WTC11 (cell line): ENCODE measurements at regions of chr10 and their contacts with region 1.

Region 1: DNA sequence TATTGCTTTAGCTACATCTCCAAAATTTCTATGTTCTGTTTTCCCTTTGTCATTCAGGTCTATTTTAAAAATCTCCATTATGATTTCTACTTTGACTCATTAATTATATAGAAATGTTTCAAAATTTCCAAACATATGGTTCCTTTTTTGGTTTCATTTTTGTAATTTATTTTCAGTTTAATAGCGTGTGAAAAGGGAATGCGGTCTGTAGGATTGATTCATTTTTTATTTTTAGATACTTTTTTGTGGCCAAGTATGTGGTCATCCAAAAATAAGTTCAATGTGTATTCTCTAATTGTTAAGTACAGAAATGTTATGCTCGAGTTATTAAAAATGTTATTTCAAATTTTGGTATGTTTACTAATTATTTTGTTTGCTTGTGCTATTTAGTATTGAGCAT is 72.5 kb upstream of the ANKRD1 start:
- DNase-seq: no peak
- ATAC-seq: no peak
- H3K4me3 Mint-ChIP-seq: no peak overlapping the region
- H3K27ac Mint-ChIP-seq: no peak overlapping the region
- H3K4me1 Mint-ChIP-seq: no peaks in the 10 kb centered on the region
- H3K27me3 Mint-ChIP-seq: peaks cover 11% of the 10 kb centered on the region
- CTCF ChIP-seq: no peak

Region 2: GRCh38 chr10:90857635-90858460 is 135.5 kb before region 1 on chr10 and contains the start of gene HTR7:
- CTCF ChIA-PET with region 1: no interaction called
- POLR2A ChIA-PET with region 1: no interaction called
- DNase-seq: peak; percentile 78
- ATAC-seq: peak; percentile 86
- H3K4me3 Mint-ChIP-seq: peak within 1 kb of the TSS; percentile 94
- H3K27ac Mint-ChIP-seq: no peak within 1 kb of the TSS; the same call in 1 of the 2 replicates
- H3K4me1 Mint-ChIP-seq: peaks cover 50% of the 10 kb centered on the region
- H3K27me3 Mint-ChIP-seq: peaks cover 51% of the 10 kb centered on the region
- CTCF ChIP-seq: peak; percentile 41
- total RNA-seq, gene HTR7: 8.9 to 11.2 TPM (median 9.3 TPM) in 3 replicates

Region 3: GRCh38 chr10:90890347-90890746 is 103.0 kb before region 1 on chr10:
- CTCF ChIA-PET with region 1: no interaction called
- POLR2A ChIA-PET with region 1: no interaction called
- DNase-seq: no peak
- ATAC-seq: no peak
- H3K4me3 Mint-ChIP-seq: no peak overlapping the region
- H3K27ac Mint-ChIP-seq: no peak overlapping the region
- H3K4me1 Mint-ChIP-seq: no peaks in the 10 kb centered on the region
- H3K27me3 Mint-ChIP-seq: no peaks in the 10 kb centered on the region
- CTCF ChIP-seq: no peak

Region 4: GRCh38 chr10:90905925-90906324 is 87.4 kb before region 1 on chr10:
- CTCF ChIA-PET with region 1: no interaction called
- POLR2A ChIA-PET with region 1: no interaction called
- DNase-seq: no peak
- ATAC-seq: no peak
- H3K4me3 Mint-ChIP-seq: no peak overlapping the region
- H3K27ac Mint-ChIP-seq: no peak overlapping the region
- H3K4me1 Mint-ChIP-seq: no peaks in the 10 kb centered on the region
- H3K27me3 Mint-ChIP-seq: peaks cover 19% of the 10 kb centered on the region
- CTCF ChIP-seq: no peak

Region 5: GRCh38 chr10:91088300-91089140 is 95.2 kb after region 1 on chr10:
- CTCF ChIA-PET with region 1: no interaction called
- POLR2A ChIA-PET with region 1: no interaction called
- DNase-seq: no peak
- ATAC-seq: peak; percentile 67
- H3K4me3 Mint-ChIP-seq: no peak overlapping the region
- H3K27ac Mint-ChIP-seq: no peak overlapping the region
- H3K4me1 Mint-ChIP-seq: no peaks in the 10 kb centered on the region
- H3K27me3 Mint-ChIP-seq: peaks cover 2% of the 10 kb centered on the region
- CTCF ChIP-seq: no peak

Region 6: DNA sequence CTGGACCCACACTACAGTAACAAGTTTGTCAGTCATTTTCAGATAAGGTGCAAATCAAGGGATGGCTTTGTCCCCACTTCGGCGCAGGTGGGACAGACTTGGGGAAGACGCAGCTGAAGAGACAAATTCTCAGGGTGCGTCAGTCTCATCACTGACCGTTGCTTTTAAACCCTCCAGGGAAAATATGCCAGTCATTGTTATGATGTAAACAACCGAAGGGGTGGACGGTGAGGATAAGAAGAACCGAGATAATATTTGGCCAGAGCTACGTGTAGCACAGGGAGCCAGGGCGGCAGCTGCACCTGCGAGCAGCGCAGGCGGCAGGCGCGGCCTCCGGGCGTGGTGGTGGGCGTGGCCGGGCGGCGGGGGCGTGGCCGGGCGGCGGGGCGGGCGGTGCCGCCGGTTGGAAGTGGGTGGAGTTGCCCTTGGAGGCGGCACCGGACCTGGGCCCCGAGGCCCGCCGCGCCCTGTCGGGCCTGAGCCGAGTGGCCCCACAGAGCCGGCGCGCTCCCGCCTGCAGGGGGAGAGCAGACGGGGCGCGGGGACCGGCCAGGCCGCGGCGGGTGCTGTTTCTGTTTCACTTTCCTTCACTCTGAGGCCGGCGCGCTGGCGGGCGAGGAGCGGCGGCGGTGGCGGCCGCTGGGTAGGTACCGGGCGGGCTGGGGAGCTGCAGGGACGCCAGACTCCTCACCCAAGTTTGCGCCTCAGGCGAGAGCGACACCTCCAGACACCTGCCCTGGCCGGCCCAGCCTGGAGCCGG is 227.0 kb after region 1 on chr10 and contains the start of gene PCGF5:
- CTCF ChIA-PET with region 1: no interaction called
- POLR2A ChIA-PET with region 1: interaction called, 13 read pairs
- DNase-seq: peak; percentile 89
- ATAC-seq: peak; percentile 98
- H3K4me3 Mint-ChIP-seq: peak within 1 kb of the TSS; percentile 76
- H3K27ac Mint-ChIP-seq: no peak within 1 kb of the TSS
- H3K4me1 Mint-ChIP-seq: peaks cover 11% of the 10 kb centered on the region
- H3K27me3 Mint-ChIP-seq: peaks cover 69% of the 10 kb centered on the region
- CTCF ChIP-seq: no peak
- total RNA-seq, gene PCGF5: 5.1 to 5.7 TPM (median 5.2 TPM) in 3 replicates